ENCODE measurements at regions of chr6 and their contacts with region 1.

Region 1: GRCh38 chr6:139407718-139408222 is 33.3 kb upstream of the CITED2 start:
- DNase-seq: peak; percentile 98
- H3K4me3 ChIP-seq: no peak overlapping the region
- H3K27ac ChIP-seq: peak overlapping the region; percentile 67
- H3K4me1 ChIP-seq: peaks cover 23% of the 10 kb centered on the region
- H3K27me3 ChIP-seq: no peaks in the 10 kb centered on the region
- CTCF ChIP-seq: no peak

Region 2: GRCh38 chr6:139271056-139271455 is 136.7 kb before region 1 on chr6:
- CTCF ChIA-PET with region 1: no interaction called
- dilution Hi-C with region 1: no loop called
- in situ Hi-C with region 1: no loop called
- intact Hi-C with region 1: no loop called
- DNase-seq: peak; percentile 24
- H3K4me3 ChIP-seq: no peak overlapping the region
- H3K27ac ChIP-seq: no peak overlapping the region
- H3K4me1 ChIP-seq: no peaks in the 10 kb centered on the region
- H3K27me3 ChIP-seq: no peaks in the 10 kb centered on the region
- CTCF ChIP-seq: no peak

Region 3: GRCh38 chr6:139519571-139520031 is 111.8 kb after region 1 on chr6:
- CTCF ChIA-PET with region 1: no interaction called
- dilution Hi-C with region 1: no loop called
- in situ Hi-C with region 1: no loop called
- intact Hi-C with region 1: loop called (anchors 1 kb)
- DNase-seq: no peak
- H3K4me3 ChIP-seq: no peak overlapping the region
- H3K27ac ChIP-seq: peak overlapping the region; percentile 44
- H3K4me1 ChIP-seq: peaks cover 27% of the 10 kb centered on the region
- H3K27me3 ChIP-seq: no peaks in the 10 kb centered on the region
- CTCF ChIP-seq: no peak

Region 4: DNA sequence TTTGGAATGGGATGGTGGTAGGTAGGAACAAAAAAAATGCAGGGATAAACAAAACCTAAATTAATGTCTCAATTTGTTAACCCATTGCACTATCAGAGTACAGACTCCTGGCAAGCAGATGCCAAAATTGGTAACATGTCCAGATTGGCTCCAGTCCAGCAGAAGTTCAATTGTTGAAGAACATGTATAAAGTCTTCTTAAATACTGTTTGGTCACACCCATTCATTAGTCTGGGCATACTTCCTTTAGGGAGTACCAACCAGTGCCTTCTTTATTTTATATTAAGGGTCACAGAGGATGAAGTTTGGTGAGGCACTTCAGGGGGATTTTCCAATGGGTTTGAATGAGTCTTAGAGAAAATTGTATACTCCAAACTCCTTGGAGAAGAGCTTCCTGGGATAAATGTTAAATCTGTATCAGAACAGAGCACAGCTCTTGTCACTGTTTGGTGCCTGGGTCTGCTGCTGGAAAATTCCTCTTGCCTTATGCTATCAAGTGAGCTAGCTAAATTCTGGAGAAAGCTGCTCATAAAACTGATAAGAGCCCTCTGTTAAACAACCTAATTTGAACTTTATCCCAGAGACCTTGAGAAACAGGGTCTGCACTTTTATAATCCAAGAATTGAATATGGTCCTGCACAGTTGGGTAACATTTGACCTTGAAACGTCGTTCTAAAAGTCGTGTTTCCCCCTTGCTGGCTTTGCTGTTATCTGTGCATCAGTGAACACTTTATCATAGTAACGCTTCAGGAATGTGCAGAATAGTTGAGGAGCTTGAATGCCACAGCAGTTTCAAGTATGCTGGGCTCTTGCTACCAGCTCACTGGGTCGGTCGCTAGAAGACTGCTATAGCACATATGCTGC is 300.8 kb after region 1 on chr6:
- CTCF ChIA-PET with region 1: no interaction called
- dilution Hi-C with region 1: no loop called
- in situ Hi-C with region 1: no loop called
- intact Hi-C with region 1: loop called (anchors 5 kb)
- DNase-seq: peak; percentile 36
- H3K4me3 ChIP-seq: no peak overlapping the region
- H3K27ac ChIP-seq: no peak overlapping the region
- H3K4me1 ChIP-seq: peaks cover 24% of the 10 kb centered on the region
- H3K27me3 ChIP-seq: no peaks in the 10 kb centered on the region
- CTCF ChIP-seq: no peak

Measured in mammary epithelial cell (primary cell).